Mammary epithelial cell (primary cell): ENCODE measurements at regions of chr12 and their contacts with region 1.

Region 1: DNA sequence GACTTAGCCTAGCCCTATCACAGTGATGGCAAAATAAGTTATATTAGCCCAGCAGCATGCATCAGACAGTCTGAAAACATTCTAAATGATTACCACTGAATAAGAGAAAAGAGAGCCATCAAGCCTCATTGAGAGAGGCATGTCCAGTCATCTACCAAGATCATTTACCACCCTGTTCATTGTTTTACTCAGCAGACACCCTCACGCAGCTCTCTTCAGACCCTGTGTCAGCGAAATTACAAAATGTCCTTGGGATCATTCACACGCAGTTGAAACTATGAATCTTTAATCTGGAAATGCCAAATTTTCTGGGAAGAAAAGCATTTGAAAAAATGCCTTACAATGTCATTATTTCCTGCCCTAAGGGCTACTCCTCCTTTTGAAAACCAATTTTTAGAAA is 89.5 kb downstream of the PTPRO start:
- DNase-seq: no peak
- H3K4me3 ChIP-seq: no peak overlapping the region
- H3K27ac ChIP-seq: no peak overlapping the region
- H3K4me1 ChIP-seq: no peaks in the 10 kb centered on the region
- H3K27me3 ChIP-seq: no peaks in the 10 kb centered on the region
- CTCF ChIP-seq: no peak

Region 2: DNA sequence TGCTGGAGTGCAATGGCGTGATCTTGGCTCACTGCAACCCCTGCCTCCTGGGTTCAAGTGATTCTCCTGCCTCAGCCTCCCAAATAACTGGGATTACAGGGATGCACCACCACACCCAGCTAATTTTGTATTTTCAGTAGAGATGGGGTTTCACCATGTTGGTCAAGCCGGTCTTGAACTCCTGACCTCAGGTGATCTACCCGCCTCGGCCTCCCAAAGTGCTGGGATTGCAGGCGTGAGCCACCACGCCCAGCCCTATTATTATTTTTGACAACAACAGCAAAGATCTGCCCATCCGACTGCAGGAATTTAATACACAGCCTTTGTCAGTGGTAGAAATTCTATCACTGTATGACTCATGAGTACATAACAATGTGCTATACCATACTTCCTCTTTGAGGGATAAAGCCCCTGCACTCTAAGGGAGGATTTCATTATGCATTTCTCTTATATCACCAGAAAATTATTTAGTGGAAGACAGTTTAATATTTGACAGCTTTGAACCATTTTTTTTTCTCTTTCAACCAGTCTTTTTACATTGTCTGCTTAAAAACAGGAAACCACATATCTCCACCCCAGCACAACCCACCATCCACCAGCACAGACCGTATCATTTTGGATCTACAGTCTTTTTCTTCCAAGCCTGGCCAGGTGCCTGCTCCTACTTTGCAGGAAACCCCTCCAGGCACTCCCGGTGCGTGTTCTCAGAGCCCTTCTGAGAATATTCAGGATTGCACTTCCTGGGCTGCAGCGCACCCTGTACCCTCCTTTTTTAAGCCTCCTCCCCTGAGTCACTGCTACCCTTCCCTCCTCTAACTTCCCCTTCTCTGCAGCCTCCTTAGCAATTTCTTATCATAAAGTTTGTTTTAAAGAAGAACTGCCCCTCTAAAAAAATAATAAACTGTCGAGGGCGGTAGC is 451.0 kb before region 1 on chr12:
- CTCF ChIA-PET with region 1: no interaction called
- dilution Hi-C with region 1: no loop called
- in situ Hi-C with region 1: no loop called
- intact Hi-C with region 1: no loop called
- DNase-seq: peak; percentile 48
- H3K4me3 ChIP-seq: peak overlapping the region; percentile 46 to 69 (median 59)
- H3K27ac ChIP-seq: peak overlapping the region; percentile 94
- H3K4me1 ChIP-seq: peaks cover 19% of the 10 kb centered on the region
- H3K27me3 ChIP-seq: no peaks in the 10 kb centered on the region
- CTCF ChIP-seq: no peak

Region 3: GRCh38 chr12:15208125-15208524 is 203.7 kb before region 1 on chr12:
- CTCF ChIA-PET with region 1: no interaction called
- dilution Hi-C with region 1: no loop called
- in situ Hi-C with region 1: no loop called
- intact Hi-C with region 1: no loop called
- DNase-seq: no peak
- H3K4me3 ChIP-seq: no peak overlapping the region
- H3K27ac ChIP-seq: no peak overlapping the region
- H3K4me1 ChIP-seq: peaks cover 13% of the 10 kb centered on the region
- H3K27me3 ChIP-seq: peaks cover 2% of the 10 kb centered on the region
- CTCF ChIP-seq: peak; percentile 44 to 46

Region 4: DNA sequence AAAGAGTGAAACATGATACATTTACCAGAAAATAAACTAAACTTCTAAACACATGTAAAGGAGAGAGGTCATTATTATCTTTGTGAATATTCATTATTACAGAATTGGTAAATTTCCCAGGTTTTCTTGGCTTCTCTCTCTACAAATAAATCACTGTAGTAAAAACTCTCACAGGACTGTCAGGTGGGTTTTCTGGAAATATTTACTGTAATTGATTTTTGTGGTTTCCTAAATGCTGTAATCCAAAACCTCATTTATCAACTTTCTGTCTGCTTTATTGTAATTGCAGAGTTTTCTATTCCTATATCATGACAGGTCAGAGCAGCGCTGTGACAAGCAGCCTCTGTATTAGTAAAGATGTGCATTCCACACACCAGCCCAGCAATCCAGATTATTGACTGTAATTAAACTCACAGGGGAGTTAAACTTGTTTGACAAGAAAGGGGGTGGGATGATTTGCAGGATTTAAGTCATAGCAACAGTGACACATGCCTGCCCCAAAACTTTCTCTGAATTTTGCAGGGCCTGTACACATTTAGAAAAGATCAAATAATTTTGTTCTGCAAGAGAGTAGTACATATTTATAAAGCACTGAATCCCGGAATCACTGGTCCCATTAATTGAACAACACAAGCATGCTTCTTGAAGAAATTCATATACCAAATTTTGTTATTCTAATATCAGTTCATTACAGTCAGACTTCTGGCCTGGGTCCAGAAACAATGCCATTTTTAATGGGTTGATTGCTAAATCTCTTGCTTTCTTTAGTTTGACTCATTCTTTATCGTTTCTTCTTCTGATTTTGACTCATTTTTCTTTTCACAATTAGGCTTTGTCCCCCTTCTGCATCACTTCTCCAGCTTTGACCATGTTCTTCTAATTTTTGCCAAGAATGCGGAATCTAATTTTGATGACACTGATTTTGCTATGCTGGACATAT is 47.4 kb before region 1 on chr12:
- CTCF ChIA-PET with region 1: no interaction called
- dilution Hi-C with region 1: no loop called
- in situ Hi-C with region 1: no loop called
- intact Hi-C with region 1: no loop called
- DNase-seq: peak; percentile 72
- H3K4me3 ChIP-seq: no peak overlapping the region
- H3K27ac ChIP-seq: no peak overlapping the region
- H3K4me1 ChIP-seq: peaks cover 9% of the 10 kb centered on the region
- H3K27me3 ChIP-seq: no peaks in the 10 kb centered on the region
- CTCF ChIP-seq: no peak

Region 5: GRCh38 chr12:15469356-15469755 is 57.5 kb after region 1 on chr12:
- CTCF ChIA-PET with region 1: no interaction called
- dilution Hi-C with region 1: loop called (anchors 5 kb)
- in situ Hi-C with region 1: no loop called
- intact Hi-C with region 1: no loop called
- DNase-seq: no peak
- H3K4me3 ChIP-seq: no peak overlapping the region
- H3K27ac ChIP-seq: no peak overlapping the region
- H3K4me1 ChIP-seq: no peaks in the 10 kb centered on the region
- H3K27me3 ChIP-seq: peaks cover 3% of the 10 kb centered on the region
- CTCF ChIP-seq: no peak